ENCODE measurements at regions of chr5 and their contacts with region 1.

Region 1: GRCh38 chr5:137075163-137075970 is 423.8 kb downstream of the SPOCK1 start:
- DNase-seq: peak; percentile 77 to 82
- ATAC-seq: peak; percentile 96 to 99
- H3K4me3 ChIP-seq: no peak overlapping the region
- H3K27ac ChIP-seq: no peak overlapping the region
- H3K4me1 ChIP-seq: peaks cover 11% of the 10 kb centered on the region; the same call in 2 of the 3 replicates
- CTCF ChIP-seq: peak; percentile 70
- EP300 ChIP-seq: no peak
- POLR2A ChIP-seq: no peak
- RAD21 ChIP-seq: peak; percentile 63 to 75

Region 2: DNA sequence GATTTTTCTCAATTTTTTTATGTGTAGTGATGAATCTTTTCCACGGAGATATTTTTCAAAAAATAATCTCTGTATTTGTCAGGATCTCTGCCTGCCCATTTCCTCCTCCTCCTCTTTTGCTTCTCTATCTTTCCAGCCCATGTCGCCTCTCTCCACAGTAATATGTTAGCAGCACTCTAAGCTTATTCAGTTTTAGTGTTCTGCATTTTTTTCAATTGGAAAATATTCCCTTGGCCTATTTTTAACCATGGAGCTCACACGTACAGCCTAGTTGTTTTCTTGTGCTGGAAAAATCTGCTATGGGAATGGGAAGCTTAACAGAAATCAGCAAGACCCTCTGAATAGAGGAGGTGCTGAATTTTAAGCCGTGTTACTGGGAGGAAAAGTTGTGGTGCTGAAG is 726.3 kb before region 1 on chr5:
- CTCF ChIA-PET with region 1: no interaction called
- POLR2A ChIA-PET with region 1: no interaction called
- DNase-seq: no peak
- ATAC-seq: no peak
- H3K4me3 ChIP-seq: no peak overlapping the region
- H3K27ac ChIP-seq: no peak overlapping the region
- H3K4me1 ChIP-seq: no peaks in the 10 kb centered on the region
- CTCF ChIP-seq: no peak
- EP300 ChIP-seq: no peak
- POLR2A ChIP-seq: no peak
- RAD21 ChIP-seq: no peak

Region 3: GRCh38 chr5:137051165-137051564 is 24.2 kb before region 1 on chr5:
- CTCF ChIA-PET with region 1: no interaction called
- POLR2A ChIA-PET with region 1: no interaction called
- DNase-seq: no peak
- ATAC-seq: no peak
- H3K4me3 ChIP-seq: no peak overlapping the region
- H3K27ac ChIP-seq: no peak overlapping the region
- H3K4me1 ChIP-seq: no peaks in the 10 kb centered on the region
- CTCF ChIP-seq: no peak
- EP300 ChIP-seq: no peak
- POLR2A ChIP-seq: no peak
- RAD21 ChIP-seq: peak in 1 of 2 experiments; percentile 29; a peak in 1 of 5 replicates

Region 4: GRCh38 chr5:137086342-137086741 is 11.0 kb after region 1 on chr5:
- CTCF ChIA-PET with region 1: interaction called, 21 read pairs
- POLR2A ChIA-PET with region 1: no interaction called
- DNase-seq: no peak
- ATAC-seq: peak; percentile 43 to 48; a peak in 3 of 6 replicates
- H3K4me3 ChIP-seq: no peak overlapping the region
- H3K27ac ChIP-seq: no peak overlapping the region
- H3K4me1 ChIP-seq: no peaks in the 10 kb centered on the region
- CTCF ChIP-seq: no peak
- EP300 ChIP-seq: no peak
- POLR2A ChIP-seq: no peak
- RAD21 ChIP-seq: no peak

Region 5: DNA sequence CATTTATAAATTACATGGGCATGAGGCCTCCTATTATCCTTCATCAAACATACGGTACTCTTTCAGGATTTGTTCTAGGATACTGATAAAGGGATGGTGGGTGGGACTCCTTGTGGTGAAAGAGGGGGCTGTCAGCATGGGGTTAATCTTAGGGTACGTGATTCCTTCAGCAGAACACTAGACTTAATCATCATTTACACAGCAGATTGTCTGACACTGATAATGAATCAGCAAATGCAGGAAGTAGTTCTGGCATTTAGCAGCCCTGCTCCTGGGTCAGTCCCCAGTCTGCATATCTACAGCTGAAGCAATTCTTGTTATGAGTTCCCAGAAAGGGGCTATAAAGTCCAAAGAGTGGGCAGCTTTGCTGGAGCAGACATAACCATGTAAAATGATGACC is 39.2 kb after region 1 on chr5:
- CTCF ChIA-PET with region 1: interaction called, 11 read pairs
- POLR2A ChIA-PET with region 1: no interaction called
- DNase-seq: peak; percentile 5 to 37
- ATAC-seq: peak; percentile 66 to 84
- H3K4me3 ChIP-seq: no peak overlapping the region
- H3K27ac ChIP-seq: peak overlapping the region in 1 of 2 experiments; percentile 47; a peak in 2 of 6 replicates
- H3K4me1 ChIP-seq: peaks cover 13% of the 10 kb centered on the region
- CTCF ChIP-seq: no peak
- EP300 ChIP-seq: no peak
- POLR2A ChIP-seq: no peak
- RAD21 ChIP-seq: no peak

Region 6: GRCh38 chr5:137142764-137143605 is 67.6 kb after region 1 on chr5:
- CTCF ChIA-PET with region 1: interaction called, 10 read pairs
- POLR2A ChIA-PET with region 1: no interaction called
- DNase-seq: no peak
- ATAC-seq: peak in 1 of 2 experiments; percentile 35; a peak in 2 of 6 replicates
- H3K4me3 ChIP-seq: no peak overlapping the region
- H3K27ac ChIP-seq: no peak overlapping the region
- H3K4me1 ChIP-seq: peaks cover 3% of the 10 kb centered on the region; the same call in 1 of the 3 replicates
- CTCF ChIP-seq: no peak
- EP300 ChIP-seq: no peak
- POLR2A ChIP-seq: no peak
- RAD21 ChIP-seq: no peak

Region 7: GRCh38 chr5:137155261-137156000 is 80.1 kb after region 1 on chr5:
- CTCF ChIA-PET with region 1: no interaction called
- POLR2A ChIA-PET with region 1: no interaction called
- DNase-seq: no peak
- ATAC-seq: no peak
- H3K4me3 ChIP-seq: no peak overlapping the region
- H3K27ac ChIP-seq: no peak overlapping the region
- H3K4me1 ChIP-seq: no peaks in the 10 kb centered on the region
- CTCF ChIP-seq: no peak
- EP300 ChIP-seq: no peak
- POLR2A ChIP-seq: no peak
- RAD21 ChIP-seq: no peak

Region 8: GRCh38 chr5:137195485-137195884 is 120.1 kb after region 1 on chr5:
- CTCF ChIA-PET with region 1: interaction called, 11 read pairs
- POLR2A ChIA-PET with region 1: no interaction called
- DNase-seq: peak in 1 of 2 experiments; percentile 20
- ATAC-seq: no peak
- H3K4me3 ChIP-seq: no peak overlapping the region
- H3K27ac ChIP-seq: no peak overlapping the region
- H3K4me1 ChIP-seq: peaks cover 41% of the 10 kb centered on the region
- CTCF ChIP-seq: no peak
- EP300 ChIP-seq: no peak
- POLR2A ChIP-seq: no peak
- RAD21 ChIP-seq: no peak

Region 9: DNA sequence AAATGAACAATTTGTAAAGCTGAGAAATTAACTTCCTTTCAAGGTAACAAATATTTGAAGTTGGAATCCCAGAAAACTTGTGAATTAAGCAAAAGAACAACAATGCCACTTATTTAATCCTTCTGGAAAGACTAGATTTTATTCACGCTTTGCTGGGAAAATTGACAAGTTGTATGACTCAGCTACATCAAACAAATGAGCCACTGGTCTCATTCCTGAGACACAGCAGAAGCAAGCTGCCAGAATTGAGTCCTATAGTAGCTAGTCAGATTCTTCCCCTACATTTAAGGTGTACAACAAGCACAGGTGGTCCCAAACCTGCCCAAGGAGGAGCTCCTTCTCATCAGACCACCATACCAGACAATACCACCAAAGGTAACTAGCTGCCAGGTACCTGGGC is 143.1 kb after region 1 on chr5:
- CTCF ChIA-PET with region 1: interaction called, 15 read pairs
- POLR2A ChIA-PET with region 1: interaction called, 3 read pairs
- DNase-seq: peak; percentile 16 to 31
- ATAC-seq: peak; percentile 44 to 69; a peak in 3 of 6 replicates
- H3K4me3 ChIP-seq: no peak overlapping the region
- H3K27ac ChIP-seq: peak overlapping the region; percentile 33 to 64; a peak in 4 of 6 replicates
- H3K4me1 ChIP-seq: peaks cover 47% of the 10 kb centered on the region
- CTCF ChIP-seq: no peak
- EP300 ChIP-seq: no peak
- POLR2A ChIP-seq: no peak
- RAD21 ChIP-seq: no peak